Dorsolateral prefrontal cortex (tissue), 120 donors: ENCODE measurements at regions of chr6 and their contacts with region 1.

Region 1: GRCh38 chr6:33391278-33391921 is at the start of gene KIFC1:
- DNase-seq: peak; percentile 97 to 100 (median 99)
- H3K4me3 ChIP-seq: peak within 1 kb of the TSS; percentile 25 to 78 (median 62)
- H3K27ac ChIP-seq: peak within 1 kb of the TSS; percentile 78 to 99 (median 95)
- H3K27me3 ChIP-seq: no peaks in the 10 kb centered on the region
- CTCF ChIP-seq: peak; percentile 96 to 100 (median 99)
- total RNA-seq, gene KIFC1: 0.11 to 3.3 (median 0.62) TPM in 96 of 120 experiments, not detected in the others

Region 2: GRCh38 chr6:33320315-33321181 is 70.9 kb before region 1 on chr6:
- intact Hi-C with region 1: no loop called
- DNase-seq: no peak
- H3K4me3 ChIP-seq: peak overlapping the region in 5 of 59 donors; percentile 2 to 79 (median 23)
- H3K27ac ChIP-seq: peak overlapping the region in 1 of 59 donors; percentile 27
- H3K27me3 ChIP-seq: no peaks in the 10 kb centered on the region
- CTCF ChIP-seq: no peak

Region 3: GRCh38 chr6:33410050-33410710 is 18.8 kb after region 1 on chr6:
- intact Hi-C with region 1: loop called (anchors 1 kb)
- DNase-seq: peak; percentile 92 to 99 (median 97)
- H3K4me3 ChIP-seq: peak overlapping the region; percentile 61 to 99 (median 89)
- H3K27ac ChIP-seq: peak overlapping the region; percentile 84 to 100 (median 98)
- H3K27me3 ChIP-seq: no peaks in the 10 kb centered on the region
- CTCF ChIP-seq: peak in 11 of 56 donors; percentile 6 to 26 (median 12)

Region 4: DNA sequence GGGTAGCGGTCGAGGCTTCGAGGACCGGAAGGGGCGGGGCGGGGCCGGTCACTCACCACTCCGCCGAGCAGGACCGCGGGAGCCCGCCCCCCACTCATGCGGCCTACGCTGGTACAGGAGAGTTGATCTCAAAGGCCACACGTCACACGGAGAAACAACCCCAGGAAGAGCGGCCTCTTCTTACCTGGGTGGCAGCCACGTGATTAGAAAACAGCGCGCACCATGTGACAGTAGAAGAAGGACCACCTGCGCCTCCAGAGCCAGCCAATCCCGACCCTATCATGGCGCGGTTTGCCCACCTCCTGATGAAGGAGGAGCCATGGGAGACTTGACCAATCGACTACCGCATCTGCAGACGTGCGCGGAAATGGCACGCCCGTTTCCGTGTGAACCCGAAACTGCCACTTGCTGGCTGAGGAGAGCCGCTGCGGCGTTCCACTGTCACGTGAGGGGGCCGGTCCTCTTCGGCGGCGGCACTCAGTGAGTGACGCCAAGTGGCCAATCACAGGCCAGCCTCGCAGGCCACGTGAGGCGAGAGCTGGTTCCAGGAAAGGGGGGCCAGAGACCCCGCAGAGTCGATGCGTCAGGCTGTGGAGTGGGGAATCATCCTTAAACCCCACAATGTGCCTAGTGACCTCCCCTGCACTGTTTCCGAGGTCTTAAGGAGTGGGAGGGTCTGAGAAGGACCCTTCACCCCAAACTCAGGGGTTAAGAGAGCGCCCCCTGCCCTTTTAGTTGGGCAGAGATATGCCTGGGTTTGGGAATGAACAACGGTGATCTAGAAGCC is 26.7 kb after region 1 on chr6 and contains the start of gene CUTA:
- intact Hi-C with region 1: loop called in 1 of 2 experiments (anchors 2 kb)
- DNase-seq: peak; percentile 100
- H3K4me3 ChIP-seq: peak within 1 kb of the TSS; percentile 57 to 97 (median 86)
- H3K27ac ChIP-seq: peak within 1 kb of the TSS; percentile 52 to 99 (median 97)
- H3K27me3 ChIP-seq: no peaks in the 10 kb centered on the region
- CTCF ChIP-seq: peak in 55 of 56 donors; percentile 31 to 79 (median 62)
- total RNA-seq, gene CUTA: 118 to 222 (median 177) TPM

Region 5: DNA sequence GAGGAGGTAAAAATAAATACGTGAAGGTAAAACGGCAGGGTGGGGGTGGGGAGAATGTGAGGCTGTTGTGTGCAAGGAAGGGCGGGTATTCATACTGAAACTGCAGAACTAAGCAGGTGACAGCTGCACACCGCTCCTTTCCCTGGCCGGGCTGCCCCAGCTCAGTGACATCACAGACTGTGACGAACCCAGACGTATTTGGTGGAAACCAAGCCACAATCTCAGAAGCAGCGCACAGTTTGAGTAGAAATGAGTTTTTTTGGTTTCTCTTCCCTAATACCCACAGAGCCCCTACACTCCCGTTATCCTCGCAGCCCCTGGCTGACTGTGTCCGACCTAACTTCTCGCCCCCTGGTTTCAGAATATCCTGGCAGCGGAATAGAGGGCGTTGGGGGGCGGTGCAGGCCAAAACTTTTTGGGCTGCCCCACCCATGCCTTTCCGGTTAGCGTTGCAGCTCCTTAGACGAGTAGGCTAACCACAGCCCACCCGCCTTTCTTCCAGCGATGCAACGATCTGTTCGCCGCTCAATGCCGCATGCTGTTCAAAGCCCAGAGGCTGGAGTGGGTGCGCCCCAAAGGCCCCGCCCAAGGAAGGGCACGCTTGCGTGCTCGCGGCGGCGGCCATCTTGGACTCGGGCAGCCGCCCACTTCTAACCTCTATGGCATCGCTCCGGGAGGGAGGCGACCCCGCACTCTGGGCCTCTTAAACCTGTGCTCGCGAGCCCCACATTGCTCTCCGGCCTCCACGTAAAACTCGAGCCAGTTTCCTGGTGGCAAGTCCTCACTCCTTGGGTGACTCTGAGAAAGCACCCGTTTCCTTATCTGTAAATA is 179.6 kb after region 1 on chr6:
- intact Hi-C with region 1: loop called in 1 of 2 experiments (anchors 2 kb)
- DNase-seq: peak; percentile 72 to 90 (median 84)
- H3K4me3 ChIP-seq: peak overlapping the region; percentile 58 to 95 (median 73)
- H3K27ac ChIP-seq: peak overlapping the region; percentile 59 to 97 (median 94)
- H3K27me3 ChIP-seq: no peaks in the 10 kb centered on the region
- CTCF ChIP-seq: peak in 31 of 56 donors; percentile 4 to 60 (median 27)

Region 6: GRCh38 chr6:33700391-33701050 is 309.1 kb after region 1 on chr6:
- intact Hi-C with region 1: loop called in 1 of 2 experiments (anchors 10 kb)
- DNase-seq: peak in 5 of 10 donors; percentile 28 to 67 (median 54)
- H3K4me3 ChIP-seq: no peak overlapping the region
- H3K27ac ChIP-seq: peak overlapping the region in 1 of 59 donors; percentile 19
- H3K27me3 ChIP-seq: no peaks in the 10 kb centered on the region
- CTCF ChIP-seq: peak in 55 of 56 donors; percentile 33 to 81 (median 64)